Panc1 (cell line): ENCODE measurements at regions of chr12 and their contacts with region 1.

Region 1: GRCh38 chr12:70576346-70577282 is 60.6 kb downstream of the PTPRB start:
- DNase-seq: peak; percentile 45
- ATAC-seq: peak; percentile 94
- H3K4me3 ChIP-seq: no peak overlapping the region
- H3K27ac ChIP-seq: no peak overlapping the region
- H3K4me1 ChIP-seq: no peaks in the 10 kb centered on the region
- H3K27me3 ChIP-seq: no peaks in the 10 kb centered on the region; the same call in 1 of the 2 replicates
- CTCF ChIP-seq: peak; percentile 71; the same call in 1 of the 2 replicates

Region 2: GRCh38 chr12:69765515-69765914 is 811.1 kb before region 1 on chr12:
- CTCF ChIA-PET with region 1: no interaction called
- POLR2A ChIA-PET with region 1: no interaction called
- in situ Hi-C with region 1: no loop called
- intact Hi-C with region 1: loop called (anchors 5 kb)
- DNase-seq: no peak
- ATAC-seq: no peak
- H3K4me3 ChIP-seq: no peak overlapping the region
- H3K27ac ChIP-seq: no peak overlapping the region
- H3K4me1 ChIP-seq: no peaks in the 10 kb centered on the region
- H3K27me3 ChIP-seq: no peaks in the 10 kb centered on the region
- CTCF ChIP-seq: no peak

Region 3: DNA sequence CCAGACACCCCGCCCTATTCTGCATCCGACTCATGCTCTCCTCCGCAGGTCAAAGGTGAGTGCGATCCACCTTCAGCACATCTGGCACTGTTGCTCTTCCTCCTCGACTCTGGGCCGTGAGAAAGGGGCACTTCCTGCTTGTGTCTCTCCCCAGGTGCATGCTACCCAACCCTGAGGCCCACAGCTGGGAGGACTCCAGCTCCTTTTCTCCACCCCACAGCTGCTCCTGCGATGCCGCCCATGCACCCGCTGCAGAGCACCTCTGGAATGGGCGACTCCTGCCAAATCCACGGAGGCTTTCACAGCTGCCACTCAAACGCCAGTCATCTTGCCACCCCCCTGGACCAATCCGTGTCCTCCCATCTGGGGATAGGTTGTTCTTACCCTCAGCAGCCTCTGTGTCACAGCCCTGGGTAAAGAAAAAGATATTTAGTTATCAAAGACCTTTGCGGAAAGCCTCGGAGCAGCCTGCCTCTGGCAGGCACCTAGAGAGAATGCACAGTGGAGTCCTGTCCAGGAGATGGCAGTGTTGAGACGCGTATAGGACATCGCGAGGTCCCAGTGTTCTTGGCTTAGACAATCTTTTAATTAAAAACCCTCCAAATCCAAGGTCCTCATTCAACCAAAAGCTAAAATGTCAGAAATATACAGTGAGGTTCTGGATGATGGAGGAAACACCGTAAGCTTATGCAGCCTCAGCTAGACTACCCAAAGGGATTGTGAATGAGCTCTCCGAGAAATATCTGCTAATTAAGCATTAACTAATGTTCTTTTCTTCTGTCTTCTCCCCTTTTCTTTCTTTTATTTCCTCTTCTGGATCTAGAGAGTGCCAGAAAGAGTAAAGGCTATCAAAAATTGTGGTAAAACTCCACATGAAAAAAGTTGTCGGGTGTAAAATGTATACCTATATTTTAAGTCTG is 697.3 kb before region 1 on chr12:
- CTCF ChIA-PET with region 1: interaction called, 3 read pairs
- POLR2A ChIA-PET with region 1: no interaction called
- in situ Hi-C with region 1: no loop called
- intact Hi-C with region 1: loop called (anchors 2 kb)
- DNase-seq: no peak
- ATAC-seq: peak; percentile 96
- H3K4me3 ChIP-seq: peak overlapping the region in 1 of 2 experiments; percentile 41; a peak in 2 of 4 replicates
- H3K27ac ChIP-seq: no peak overlapping the region
- H3K4me1 ChIP-seq: no peaks in the 10 kb centered on the region
- H3K27me3 ChIP-seq: peaks cover 6% of the 10 kb centered on the region; the same call in 1 of the 2 replicates
- CTCF ChIP-seq: peak; percentile 91

Region 4: DNA sequence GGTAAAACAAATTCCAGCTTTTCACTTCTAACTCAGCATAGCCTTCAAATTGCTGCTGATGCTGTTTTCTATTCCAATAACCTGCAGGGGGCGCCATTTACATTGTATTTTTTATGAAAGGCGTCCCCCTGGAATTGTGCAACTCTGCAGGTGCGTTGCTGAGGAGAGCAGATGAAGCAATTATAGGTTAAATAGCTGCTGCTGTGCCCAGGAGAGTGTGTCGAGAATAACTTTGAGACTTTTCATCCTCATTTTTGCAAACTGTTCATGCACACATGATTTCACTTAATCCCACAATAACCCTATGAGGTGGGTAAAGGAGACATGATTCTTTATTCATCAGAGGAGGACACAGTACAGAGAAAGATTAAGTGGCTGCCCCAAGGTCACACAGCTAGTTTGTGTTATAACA is 675.9 kb before region 1 on chr12:
- CTCF ChIA-PET with region 1: no interaction called
- POLR2A ChIA-PET with region 1: no interaction called
- in situ Hi-C with region 1: no loop called
- intact Hi-C with region 1: loop called (anchors 2 kb)
- DNase-seq: no peak
- ATAC-seq: peak; percentile 81; the same call in 1 of the 2 replicates
- H3K4me3 ChIP-seq: no peak overlapping the region
- H3K27ac ChIP-seq: no peak overlapping the region
- H3K4me1 ChIP-seq: no peaks in the 10 kb centered on the region
- H3K27me3 ChIP-seq: no peaks in the 10 kb centered on the region
- CTCF ChIP-seq: peak; percentile 85

Region 5: DNA sequence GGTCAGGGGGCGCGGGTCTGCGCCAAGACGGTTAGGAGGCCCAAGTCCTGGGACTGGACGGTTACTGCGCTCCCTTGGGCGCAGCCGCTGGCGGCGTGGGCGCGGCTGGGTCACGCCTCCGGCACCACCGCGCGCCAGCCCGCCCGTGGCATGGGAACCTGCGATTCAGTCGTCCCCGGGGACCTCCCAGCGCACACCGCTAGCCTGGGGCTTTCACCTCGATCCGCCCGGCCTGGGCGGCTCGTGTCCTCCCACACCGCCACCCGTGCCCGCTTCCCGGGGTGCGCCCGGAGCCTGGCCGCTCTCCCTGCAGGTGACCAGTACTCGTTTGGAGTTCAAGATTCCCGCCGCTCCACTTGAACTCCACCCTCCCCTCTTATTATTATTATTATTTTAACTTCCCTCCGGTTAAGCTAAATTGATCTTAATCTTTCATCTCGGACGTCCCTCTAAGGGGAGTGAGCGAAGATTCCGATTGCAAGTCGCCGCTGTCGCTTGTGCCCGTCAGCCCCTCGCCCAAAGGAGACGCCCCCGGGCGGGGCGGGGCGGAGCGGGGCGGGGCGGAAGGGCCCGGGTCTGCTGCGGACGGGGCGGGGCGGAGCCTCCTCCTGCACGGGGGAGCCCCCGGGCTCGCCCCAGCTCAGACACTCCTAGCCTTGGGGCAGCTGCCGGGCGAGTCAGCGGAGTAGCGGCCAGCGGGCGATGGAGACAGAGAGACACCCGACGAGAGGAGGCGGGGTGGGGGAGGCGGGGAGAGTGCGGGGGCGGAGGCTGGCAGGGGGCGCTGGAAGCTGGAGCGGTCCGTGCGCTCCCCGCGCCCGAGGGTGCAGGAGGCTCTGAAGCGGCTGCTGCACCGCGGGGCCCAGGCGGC is 210.7 kb before region 1 on chr12 and contains the start of gene KCNMB4:
- CTCF ChIA-PET with region 1: no interaction called
- POLR2A ChIA-PET with region 1: no interaction called
- in situ Hi-C with region 1: no loop called
- intact Hi-C with region 1: loop called (anchors 5 kb)
- DNase-seq: no peak
- ATAC-seq: peak; percentile 89
- H3K4me3 ChIP-seq: peak within 1 kb of the TSS; percentile 55 to 67
- H3K27ac ChIP-seq: no peak within 1 kb of the TSS
- H3K4me1 ChIP-seq: no peaks in the 10 kb centered on the region
- H3K27me3 ChIP-seq: peaks cover 37% of the 10 kb centered on the region
- CTCF ChIP-seq: no peak; the same call in 1 of the 2 replicates
- total RNA-seq, gene KCNMB4: 0.13 TPM

Region 6: DNA sequence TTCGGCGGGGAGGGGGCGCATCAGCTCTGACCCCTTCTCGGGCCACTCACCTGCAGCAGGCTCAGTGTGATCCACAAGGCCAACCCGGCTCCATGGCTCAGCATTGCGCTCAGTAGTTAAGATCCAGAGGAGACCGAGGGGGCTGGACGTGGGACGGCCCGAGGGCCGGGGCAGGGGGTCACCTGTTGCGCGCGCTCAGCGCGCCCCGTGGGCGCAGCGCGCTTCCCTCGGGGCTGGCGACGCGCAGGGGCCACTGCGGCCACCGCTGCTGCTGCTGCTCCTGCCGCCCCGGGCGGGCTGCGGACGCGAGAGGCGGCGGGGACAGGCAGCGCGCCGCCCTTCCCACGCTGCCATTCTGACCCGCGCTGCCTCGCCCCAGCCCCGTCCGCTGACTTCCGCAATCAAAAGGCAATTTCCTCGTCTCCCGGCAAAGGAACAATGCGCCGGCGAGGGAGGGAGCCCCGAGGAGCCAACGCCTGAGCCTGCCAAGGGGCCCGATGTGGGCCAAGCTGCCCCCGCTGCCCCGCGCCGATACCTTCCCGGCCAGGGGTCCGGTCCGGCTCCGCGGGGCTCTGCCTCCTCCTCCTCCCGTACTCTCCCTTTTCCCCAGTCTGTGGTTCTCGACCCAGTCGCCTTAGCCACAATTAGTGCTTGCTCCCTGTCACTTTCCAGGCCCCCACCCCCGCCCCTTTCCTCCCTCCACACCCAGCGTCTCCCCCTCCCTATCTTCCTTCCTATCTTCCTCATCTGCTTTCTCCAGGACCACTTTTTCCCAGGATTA is 33.3 kb after region 1 on chr12:
- CTCF ChIA-PET with region 1: no interaction called
- POLR2A ChIA-PET with region 1: no interaction called
- in situ Hi-C with region 1: no loop called
- intact Hi-C with region 1: no loop called
- DNase-seq: no peak
- ATAC-seq: peak; percentile 84
- H3K4me3 ChIP-seq: peak overlapping the region; percentile 44 to 50
- H3K27ac ChIP-seq: no peak overlapping the region
- H3K4me1 ChIP-seq: peaks cover 3% of the 10 kb centered on the region; the same call in 1 of the 2 replicates
- H3K27me3 ChIP-seq: peaks cover 13% of the 10 kb centered on the region
- CTCF ChIP-seq: no peak

Region 7: GRCh38 chr12:70660620-70661219 is 84.1 kb after region 1 on chr12:
- CTCF ChIA-PET with region 1: no interaction called
- POLR2A ChIA-PET with region 1: no interaction called
- in situ Hi-C with region 1: no loop called
- intact Hi-C with region 1: no loop called
- DNase-seq: peak; percentile 13
- ATAC-seq: no peak
- H3K4me3 ChIP-seq: no peak overlapping the region
- H3K27ac ChIP-seq: no peak overlapping the region
- H3K4me1 ChIP-seq: no peaks in the 10 kb centered on the region; the same call in 1 of the 2 replicates
- H3K27me3 ChIP-seq: no peaks in the 10 kb centered on the region
- CTCF ChIP-seq: no peak